Thyroid gland (tissue), 4 donors: ENCODE measurements at regions of chr18 and their contacts with region 1.

Region 1: DNA sequence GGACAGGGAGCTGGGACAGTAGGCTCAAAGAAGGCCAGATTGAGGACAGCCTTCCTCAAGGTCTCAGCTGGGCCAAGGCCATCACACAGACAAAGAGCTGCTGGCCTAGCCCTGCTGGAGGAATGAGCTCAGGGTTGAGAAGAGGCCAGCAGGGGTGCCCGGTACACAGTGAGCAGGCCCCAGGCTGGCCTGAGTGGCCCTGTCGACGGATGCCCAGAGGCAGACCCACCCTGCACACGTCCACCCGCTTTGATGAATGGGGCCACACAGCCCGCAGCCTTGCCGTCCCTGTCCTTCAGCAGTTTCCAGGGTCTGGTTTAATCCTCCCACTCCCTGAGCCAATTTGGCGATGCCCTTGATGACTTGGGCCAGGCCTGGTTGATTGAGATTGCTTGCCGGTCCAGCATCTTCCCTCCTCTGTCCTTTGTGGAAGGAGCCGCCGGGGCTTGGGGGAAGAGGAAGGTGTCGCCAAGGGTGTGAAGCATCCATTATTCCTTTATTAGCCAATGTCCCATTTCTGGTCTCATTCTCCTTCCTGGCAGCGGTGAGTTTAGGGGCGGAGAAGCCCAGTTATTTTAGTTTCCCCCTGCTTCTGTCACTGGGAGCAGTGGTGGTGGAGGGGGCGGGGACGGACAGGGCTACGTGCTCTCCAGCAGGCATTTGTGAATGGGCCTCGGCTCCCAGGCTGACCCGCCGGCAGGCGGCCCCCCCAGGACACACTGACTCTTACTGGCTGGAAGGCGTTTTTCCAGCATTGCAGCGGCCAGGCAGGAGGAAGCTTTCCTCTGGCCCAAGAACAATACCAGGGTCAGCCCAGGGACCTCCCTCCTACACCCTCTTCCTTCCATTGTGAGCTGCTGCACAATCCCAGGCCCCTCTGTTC is 141.7 kb downstream of the CTIF start:
- DNase-seq: peak; percentile 10 to 36
- H3K4me3 ChIP-seq: no peak overlapping the region
- H3K27ac ChIP-seq: peak overlapping the region in 2 of 3 donors; percentile 35 to 54
- H3K4me1 ChIP-seq: peaks cover 3 to 29% of the 10 kb centered on the region in 2 donors
- H3K27me3 ChIP-seq: no peaks in the 10 kb centered on the region
- CTCF ChIP-seq: no peak
- POLR2A ChIP-seq: no peak

Region 2: GRCh38 chr18:48859311-48860268 is 179.0 kb after region 1 on chr18:
- intact Hi-C with region 1: loop called (anchors 10 kb)
- DNase-seq: no peak
- H3K4me3 ChIP-seq: no peak overlapping the region
- H3K27ac ChIP-seq: no peak overlapping the region
- H3K4me1 ChIP-seq: peaks cover 4 to 11% of the 10 kb centered on the region in 2 donors
- H3K27me3 ChIP-seq: no peaks in the 10 kb centered on the region
- CTCF ChIP-seq: no peak
- POLR2A ChIP-seq: no peak